ENCODE measurements at regions of chr3 and their contacts with region 1.

Region 1: DNA sequence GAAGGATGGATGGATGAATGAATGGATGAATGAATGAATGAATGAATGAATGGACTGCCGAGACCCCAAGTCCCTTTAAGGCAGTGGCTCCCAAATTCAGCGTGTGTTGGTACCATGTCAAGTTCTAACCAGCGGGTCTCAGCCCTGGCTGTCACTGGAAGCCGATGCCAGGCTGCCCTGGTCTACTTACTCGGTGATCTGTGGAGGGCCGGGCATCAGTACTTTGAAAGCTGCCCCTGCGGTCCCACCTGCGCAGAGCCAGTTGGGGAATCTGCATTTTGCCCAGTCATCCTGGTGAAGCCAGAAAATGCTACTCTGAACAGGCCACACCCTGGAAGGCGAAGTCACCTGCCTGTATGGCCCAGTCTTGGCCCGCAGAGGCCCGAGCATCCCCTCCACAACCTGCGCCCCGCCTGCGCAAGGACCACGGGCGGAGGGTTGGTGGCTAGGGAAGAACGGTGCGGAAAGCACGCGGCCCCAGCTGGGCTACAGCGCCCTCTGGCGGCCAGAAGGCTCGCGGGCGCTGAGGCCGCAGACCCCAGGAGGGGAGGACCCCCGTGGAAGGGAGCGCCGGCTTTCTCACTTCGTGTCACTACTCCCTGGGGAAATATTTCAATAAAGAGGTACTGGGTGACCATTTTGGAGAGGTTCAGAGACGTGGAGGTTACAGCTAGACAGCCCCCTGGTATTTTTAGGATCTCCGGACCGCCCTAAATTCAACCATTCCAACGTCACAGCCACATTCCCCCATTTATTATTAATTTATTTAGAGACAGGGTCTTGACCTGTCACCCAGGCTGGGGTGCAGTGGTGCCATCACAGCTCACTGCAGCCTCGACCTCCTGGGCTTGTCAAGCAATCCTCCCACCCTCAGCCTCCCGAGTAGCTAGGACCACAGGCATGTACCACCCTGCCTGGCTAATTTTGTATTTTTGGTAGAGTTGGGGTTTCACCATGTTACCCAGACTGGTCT is 34.9 kb downstream of the PRKCD start:
- H3K4me3 Mint-ChIP-seq: no peak overlapping the region
- H3K27ac Mint-ChIP-seq: peak overlapping the region; percentile 63
- H3K4me1 Mint-ChIP-seq: peaks cover 55% of the 10 kb centered on the region
- H3K27me3 Mint-ChIP-seq: peaks cover 2% of the 10 kb centered on the region

Region 2: DNA sequence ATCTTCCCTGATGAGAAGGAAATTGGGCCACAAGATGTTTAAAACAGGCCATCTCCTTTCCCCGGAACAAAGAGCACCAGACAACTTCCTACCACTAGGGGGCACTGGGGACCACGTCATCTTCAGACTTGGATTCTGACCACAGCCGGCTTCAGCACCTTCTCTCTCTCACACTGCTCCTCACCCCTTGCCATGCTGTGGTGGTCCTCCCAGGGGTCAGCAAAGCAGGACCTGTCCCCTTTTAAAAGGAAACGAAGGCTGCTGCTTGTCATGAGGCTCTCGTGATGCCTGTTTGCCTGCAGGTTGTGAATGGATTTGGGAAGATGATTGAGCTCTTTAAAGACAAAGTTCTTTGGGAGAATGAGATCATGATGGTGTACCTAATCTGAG is 81.9 kb before region 1 on chr3:
- intact Hi-C with region 1: loop called (anchors 1 kb)
- H3K4me3 Mint-ChIP-seq: no peak overlapping the region
- H3K27ac Mint-ChIP-seq: no peak overlapping the region
- H3K4me1 Mint-ChIP-seq: peaks cover 16% of the 10 kb centered on the region
- H3K27me3 Mint-ChIP-seq: no peaks in the 10 kb centered on the region

Region 3: GRCh38 chr3:53130179-53131061 is 65.5 kb before region 1 on chr3 and contains the start of gene RFT1:
- intact Hi-C with region 1: loop called (anchors 2 kb)
- H3K4me3 Mint-ChIP-seq: peak within 1 kb of the TSS; percentile 87
- H3K27ac Mint-ChIP-seq: peak within 1 kb of the TSS; percentile 83
- H3K4me1 Mint-ChIP-seq: peaks cover 37% of the 10 kb centered on the region
- H3K27me3 Mint-ChIP-seq: no peaks in the 10 kb centered on the region

Region 4: GRCh38 chr3:53160660-53161449 is 35.0 kb before region 1 on chr3 and contains the start of gene PRKCD:
- intact Hi-C with region 1: loop called (anchors 5 kb)
- H3K4me3 Mint-ChIP-seq: peak within 1 kb of the TSS; percentile 82
- H3K27ac Mint-ChIP-seq: peak within 1 kb of the TSS; percentile 98
- H3K4me1 Mint-ChIP-seq: peaks cover 82% of the 10 kb centered on the region
- H3K27me3 Mint-ChIP-seq: peaks cover 17% of the 10 kb centered on the region